Activated T-helper 1 cell treated with anti-CD3 and anti-CD28 coated beads, Interleukin-12 subunit alpha, Interleukin-12 subunit beta, Interleukin-2, Interleukin-4 antibody, amounts not matched to agents 30 ng/mL and 10 ng/mL and 1 ng/mL, durations not matched to agents 14 hours and 24 hours and 36 hours (primary cell): ENCODE measurements at regions of chr2 and their contacts with region 1.

Region 1: GRCh38 chr2:147182260-147182659 is 662.6 kb upstream of the ACVR2A start:
- DNase-seq: peak; percentile 67
- H3K4me3 Mint-ChIP-seq: peak overlapping the region; percentile 40
- H3K27ac Mint-ChIP-seq: peak overlapping the region; percentile 86
- H3K4me1 Mint-ChIP-seq: peaks cover 32% of the 10 kb centered on the region
- H3K27me3 Mint-ChIP-seq: peaks cover 5% of the 10 kb centered on the region

Region 2: GRCh38 chr2:147122944-147123343 is 59.3 kb before region 1 on chr2:
- intact Hi-C with region 1: no loop called
- DNase-seq: no peak
- H3K4me3 Mint-ChIP-seq: no peak overlapping the region
- H3K27ac Mint-ChIP-seq: no peak overlapping the region
- H3K4me1 Mint-ChIP-seq: no peaks in the 10 kb centered on the region
- H3K27me3 Mint-ChIP-seq: peaks cover 3% of the 10 kb centered on the region

Region 3: GRCh38 chr2:147198651-147199171 is 16.5 kb after region 1 on chr2:
- intact Hi-C with region 1: loop called (anchors 1 kb)
- DNase-seq: no peak
- H3K4me3 Mint-ChIP-seq: no peak overlapping the region
- H3K27ac Mint-ChIP-seq: no peak overlapping the region
- H3K4me1 Mint-ChIP-seq: no peaks in the 10 kb centered on the region
- H3K27me3 Mint-ChIP-seq: peaks cover 4% of the 10 kb centered on the region

Region 4: GRCh38 chr2:147231607-147232006 is 49.3 kb after region 1 on chr2:
- intact Hi-C with region 1: loop called (anchors 2 kb)
- DNase-seq: no peak
- H3K4me3 Mint-ChIP-seq: no peak overlapping the region
- H3K27ac Mint-ChIP-seq: no peak overlapping the region
- H3K4me1 Mint-ChIP-seq: peaks cover 8% of the 10 kb centered on the region
- H3K27me3 Mint-ChIP-seq: no peaks in the 10 kb centered on the region

Region 5: DNA sequence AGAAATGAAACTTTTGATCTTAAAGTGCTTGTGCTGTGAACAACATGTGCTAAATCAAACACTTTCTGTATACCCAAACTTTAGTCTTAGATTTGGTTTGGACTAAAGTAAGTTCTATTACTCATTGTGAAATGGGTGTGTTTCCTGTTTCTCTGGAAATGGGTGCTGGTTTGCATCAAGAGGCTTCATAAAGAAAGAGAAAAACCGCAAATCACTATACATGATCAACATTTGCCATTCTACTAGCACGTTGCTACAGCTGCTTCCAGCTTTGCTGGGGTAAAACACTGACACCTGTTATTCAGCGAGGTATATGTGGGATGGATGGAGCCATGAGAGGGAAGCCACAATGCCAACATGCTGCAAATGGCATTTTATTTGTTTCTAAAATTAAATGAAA is 115.6 kb after region 1 on chr2:
- intact Hi-C with region 1: loop called (anchors 1 kb)
- DNase-seq: peak; percentile 49
- H3K4me3 Mint-ChIP-seq: peak overlapping the region; percentile 36
- H3K27ac Mint-ChIP-seq: peak overlapping the region; percentile 89
- H3K4me1 Mint-ChIP-seq: peaks cover 72% of the 10 kb centered on the region
- H3K27me3 Mint-ChIP-seq: no peaks in the 10 kb centered on the region

Region 6: GRCh38 chr2:147628971-147629421 is 446.7 kb after region 1 on chr2:
- intact Hi-C with region 1: loop called (anchors 5 kb)
- DNase-seq: no peak
- H3K4me3 Mint-ChIP-seq: peak overlapping the region; percentile 35
- H3K27ac Mint-ChIP-seq: peak overlapping the region; percentile 60
- H3K4me1 Mint-ChIP-seq: peaks cover 24% of the 10 kb centered on the region
- H3K27me3 Mint-ChIP-seq: no peaks in the 10 kb centered on the region